ENCODE measurements at regions of chr7 and their contacts with region 1.

Region 1: GRCh38 chr7:140517546-140518369 is 38.5 kb upstream of the MKRN1 start:
- DNase-seq: peak; percentile 16 to 88
- H3K4me3 ChIP-seq: peak overlapping the region in 1 of 2 donors; percentile 6
- H3K27ac ChIP-seq: no peak overlapping the region
- H3K4me1 ChIP-seq: peaks cover 0 to 3% of the 10 kb centered on the region in 2 donors
- H3K27me3 ChIP-seq: no peaks in the 10 kb centered on the region
- CTCF ChIP-seq: peak; percentile 64 to 77 (median 72)

Region 2: GRCh38 chr7:140494867-140495266 is 22.9 kb before region 1 on chr7:
- intact Hi-C with region 1: no loop called
- DNase-seq: no peak
- H3K4me3 ChIP-seq: no peak overlapping the region
- H3K27ac ChIP-seq: no peak overlapping the region
- H3K4me1 ChIP-seq: no peaks in the 10 kb centered on the region
- H3K27me3 ChIP-seq: no peaks in the 10 kb centered on the region
- CTCF ChIP-seq: no peak

Region 3: GRCh38 chr7:140653319-140654108 is 135.8 kb after region 1 on chr7:
- intact Hi-C with region 1: loop called (anchors 1 kb)
- DNase-seq: peak in 1 of 2 donors; percentile 77
- H3K4me3 ChIP-seq: no peak overlapping the region
- H3K27ac ChIP-seq: no peak overlapping the region
- H3K4me1 ChIP-seq: no peaks in the 10 kb centered on the region
- H3K27me3 ChIP-seq: no peaks in the 10 kb centered on the region
- CTCF ChIP-seq: peak; percentile 77 to 90 (median 82)